RWPE1 (cell line): ENCODE measurements at regions of chr6 and their contacts with region 1.

Region 1: GRCh38 chr6:111011360-111012142 is 29.7 kb downstream of the RPF2 start:
- DNase-seq: peak; percentile 40
- H3K27ac ChIP-seq: no peak overlapping the region
- CTCF ChIP-seq: peak; percentile 77

Region 2: GRCh38 chr6:111030008-111031007 is 18.8 kb after region 1 on chr6:
- CTCF ChIA-PET with region 1: interaction called, 10 read pairs
- POLR2A ChIA-PET with region 1: no interaction called
- DNase-seq: no peak
- H3K27ac ChIP-seq: no peak overlapping the region
- CTCF ChIP-seq: no peak